ENCODE measurements at regions of chr3 and their contacts with region 1.

Region 1: GRCh38 chr3:157081681-157082210 is 78.2 kb downstream of the CCNL1 start:
- DNase-seq: peak; percentile 95 to 96 (median 95)
- H3K4me3 ChIP-seq: no peak overlapping the region
- H3K27ac ChIP-seq: no peak overlapping the region
- H3K4me1 ChIP-seq: peaks cover 0 to 5% (median 3%) of the 10 kb centered on the region in 3 donors
- H3K27me3 ChIP-seq: no peaks in the 10 kb centered on the region
- CTCF ChIP-seq: peak; percentile 96

Region 2: DNA sequence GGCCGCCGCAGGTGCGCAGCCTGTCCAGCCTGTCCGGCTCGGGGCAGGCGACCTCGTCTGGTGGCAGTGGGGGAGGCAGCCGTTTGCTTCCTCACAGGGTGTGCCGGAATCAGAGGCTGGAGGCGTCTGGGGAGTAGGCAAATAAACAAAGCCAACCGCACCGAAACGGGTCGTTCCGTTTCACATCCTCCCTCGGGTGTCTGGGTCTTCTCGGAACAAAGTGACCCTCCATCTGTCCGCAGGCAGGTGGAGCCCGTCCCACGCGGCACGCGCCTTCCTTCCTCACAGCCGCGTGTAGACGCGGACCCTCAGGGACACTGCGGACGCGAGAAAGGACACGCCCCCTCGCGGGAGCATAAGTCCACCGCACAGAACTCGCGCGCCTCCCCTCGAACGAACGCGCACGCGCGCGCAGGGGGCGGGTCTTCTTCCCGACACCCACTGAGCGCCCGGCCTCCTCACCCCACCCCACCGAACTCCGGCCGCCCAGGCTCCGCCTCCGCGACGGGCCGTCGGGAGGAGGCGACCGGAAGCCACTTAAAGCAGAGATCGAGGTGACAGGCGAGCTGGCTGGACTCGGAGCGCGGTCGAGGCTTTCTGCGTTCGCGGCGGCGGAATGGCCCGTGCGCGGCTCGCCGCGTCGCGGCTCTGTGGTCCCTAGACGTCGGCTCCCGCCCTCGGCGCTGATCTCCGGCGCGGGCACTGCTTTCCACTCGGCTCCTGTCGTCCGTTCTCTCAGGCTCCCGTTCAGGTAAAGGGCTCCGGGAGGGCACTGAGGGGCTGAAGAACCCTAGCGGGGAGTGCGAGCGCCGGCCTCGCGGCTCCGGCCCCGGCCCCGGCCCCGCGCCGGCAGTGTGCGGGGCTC is 407.5 kb before region 1 on chr3 and contains the start of gene TIPARP:
- intact Hi-C with region 1: loop called (anchors 10 kb)
- DNase-seq: peak; percentile 99 to 100 (median 100)
- H3K4me3 ChIP-seq: peak within 1 kb of the TSS; percentile 75 to 88 (median 80)
- H3K27ac ChIP-seq: peak within 1 kb of the TSS; percentile 90 to 94
- H3K4me1 ChIP-seq: peaks cover 0 to 5% (median 2%) of the 10 kb centered on the region in 3 donors
- H3K27me3 ChIP-seq: no peaks in the 10 kb centered on the region
- CTCF ChIP-seq: peak; percentile 47
- total RNA-seq, gene TIPARP: 21.8 TPM

Region 3: GRCh38 chr3:157130467-157131251 is 48.9 kb after region 1 on chr3:
- intact Hi-C with region 1: loop called (anchors 10 kb)
- DNase-seq: peak; percentile 76 to 92 (median 88)
- H3K4me3 ChIP-seq: no peak overlapping the region
- H3K27ac ChIP-seq: peak overlapping the region in 1 of 2 donors; percentile 47
- H3K4me1 ChIP-seq: peaks cover 0 to 19% (median 17%) of the 10 kb centered on the region in 3 donors
- H3K27me3 ChIP-seq: no peaks in the 10 kb centered on the region
- CTCF ChIP-seq: peak; percentile 53